ENCODE measurements at regions of chr3 and their contacts with region 1.

Region 1: DNA sequence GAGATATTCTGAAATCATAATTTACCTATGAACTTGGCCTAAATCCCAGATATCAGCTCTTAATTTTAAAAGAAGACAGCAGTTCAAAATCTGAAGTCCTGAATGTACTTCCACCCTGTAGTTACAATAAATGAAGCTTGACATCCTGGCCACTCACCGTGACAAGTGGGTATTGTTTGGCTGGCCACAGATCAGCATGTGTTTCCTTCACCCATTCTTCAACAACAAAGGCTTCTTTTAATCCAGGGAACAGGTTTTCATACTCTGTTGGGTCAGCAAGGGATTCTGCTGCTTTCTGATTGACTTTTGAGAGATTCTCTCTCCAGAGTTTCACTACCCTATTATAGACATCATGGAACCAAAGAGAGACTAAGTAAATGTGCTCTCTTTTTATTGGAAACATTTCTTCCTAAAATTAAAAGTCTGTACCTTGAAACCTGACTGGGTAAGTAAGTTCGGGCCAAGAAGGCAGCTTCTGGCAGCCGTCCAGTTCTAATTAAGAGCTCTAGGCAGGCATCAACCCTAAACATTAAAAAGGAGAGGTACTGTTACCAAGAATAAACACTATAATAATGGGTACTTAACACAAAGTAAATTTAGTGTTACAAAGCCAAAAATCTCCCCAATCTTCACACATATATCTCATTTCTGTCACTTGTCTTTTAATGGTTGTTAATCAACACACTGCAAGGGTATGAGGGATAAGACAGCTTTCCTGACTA is 15.2 kb downstream of the MRPS22 start:
- DNase-seq: no peak
- H3K4me3 Mint-ChIP-seq: no peak overlapping the region
- H3K27ac Mint-ChIP-seq: no peak overlapping the region
- H3K4me1 Mint-ChIP-seq: peaks cover 29% of the 10 kb centered on the region
- H3K27me3 Mint-ChIP-seq: no peaks in the 10 kb centered on the region

Region 2: DNA sequence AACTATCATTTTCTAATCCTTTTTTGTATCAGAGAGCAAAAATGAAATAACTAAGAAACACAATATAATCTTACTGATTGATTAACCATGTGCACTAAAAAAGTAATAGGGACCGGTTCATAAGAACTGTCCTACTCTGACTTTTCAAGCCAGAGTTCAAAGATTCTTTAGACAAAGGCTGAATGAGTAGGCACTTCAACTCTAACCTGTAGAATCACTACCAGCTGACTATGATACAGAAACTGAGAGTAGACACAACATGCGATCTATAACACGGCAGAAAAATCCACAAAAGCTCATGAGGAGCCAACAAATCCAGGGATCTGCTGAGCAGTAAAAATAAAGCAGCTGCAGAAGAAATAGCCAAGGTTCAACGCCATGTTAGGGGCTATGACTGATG is 21.6 kb after region 1 on chr3:
- CTCF ChIA-PET with region 1: interaction called, 3 read pairs
- POLR2A ChIA-PET with region 1: no interaction called
- intact Hi-C with region 1: loop called (anchors 2 kb)
- DNase-seq: no peak
- H3K4me3 Mint-ChIP-seq: no peak overlapping the region
- H3K27ac Mint-ChIP-seq: no peak overlapping the region
- H3K4me1 Mint-ChIP-seq: peaks cover 40% of the 10 kb centered on the region
- H3K27me3 Mint-ChIP-seq: no peaks in the 10 kb centered on the region

Region 3: DNA sequence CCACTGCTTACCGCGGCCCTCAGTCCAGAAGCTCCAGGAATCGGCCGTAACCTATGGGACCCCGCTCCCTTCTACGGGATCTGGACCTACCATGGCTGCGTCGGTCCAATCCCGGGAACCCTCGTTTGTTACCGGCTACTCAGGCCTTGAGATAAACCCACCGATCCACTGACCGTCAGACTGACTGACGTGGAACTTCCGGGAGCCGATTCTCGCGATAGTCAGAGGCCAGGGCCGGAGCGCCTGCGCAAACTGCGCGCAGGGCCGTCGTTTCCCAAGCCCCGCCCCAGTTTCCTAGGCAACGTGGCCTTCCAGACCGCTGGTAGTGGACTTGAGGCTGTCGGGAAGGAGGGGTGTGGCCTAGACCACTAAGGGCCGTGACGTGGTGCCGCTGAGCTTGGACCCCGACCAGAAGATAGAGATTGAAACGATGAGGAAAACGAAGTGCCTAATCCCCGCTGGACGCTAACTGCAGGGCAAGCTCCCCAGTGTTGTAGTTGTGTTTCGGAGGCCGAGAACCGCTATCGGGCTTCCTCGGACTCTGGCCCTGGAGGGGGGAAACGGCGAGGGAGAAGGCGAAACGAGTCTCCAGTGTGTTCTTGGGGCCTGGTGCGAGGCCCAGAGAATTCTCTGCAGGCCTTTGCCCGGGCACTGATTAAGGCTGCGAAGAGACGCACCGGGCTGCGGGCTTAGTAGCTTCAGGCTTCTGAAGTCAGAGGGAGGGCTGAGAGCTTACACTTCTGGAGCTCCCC is 30.6 kb after region 1 on chr3 and contains the start of gene COPB2:
- CTCF ChIA-PET with region 1: interaction called, 3 read pairs
- POLR2A ChIA-PET with region 1: no interaction called
- intact Hi-C with region 1: loop called (anchors 2 kb)
- DNase-seq: peak; percentile 98
- H3K4me3 Mint-ChIP-seq: peak within 1 kb of the TSS; percentile 92
- H3K27ac Mint-ChIP-seq: peak within 1 kb of the TSS; percentile 91
- H3K4me1 Mint-ChIP-seq: peaks cover 39% of the 10 kb centered on the region
- H3K27me3 Mint-ChIP-seq: no peaks in the 10 kb centered on the region
- total RNA-seq, gene COPB2: 104 TPM

Region 4: DNA sequence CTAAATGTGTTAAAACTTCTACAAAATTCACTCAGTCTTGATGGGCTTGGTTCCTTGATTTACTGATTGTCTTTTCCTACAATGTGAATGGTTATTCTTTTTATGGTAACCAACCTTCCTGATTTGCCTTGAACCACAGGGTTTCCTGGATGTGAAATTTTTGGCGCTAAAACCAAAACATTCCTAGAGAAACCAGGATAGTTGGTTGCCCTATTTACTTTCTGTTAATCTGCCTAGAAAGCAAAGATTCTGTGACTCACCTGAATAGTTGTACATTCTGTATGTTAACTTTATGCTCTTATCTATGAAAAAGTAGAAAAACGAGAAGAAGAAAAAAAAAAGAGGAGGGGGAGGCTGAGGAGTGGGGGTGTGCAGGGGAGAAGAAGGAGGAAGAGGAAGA is 140.5 kb after region 1 on chr3:
- CTCF ChIA-PET with region 1: no interaction called
- POLR2A ChIA-PET with region 1: no interaction called
- intact Hi-C with region 1: no loop called
- DNase-seq: no peak
- H3K4me3 Mint-ChIP-seq: no peak overlapping the region
- H3K27ac Mint-ChIP-seq: no peak overlapping the region
- H3K4me1 Mint-ChIP-seq: no peaks in the 10 kb centered on the region
- H3K27me3 Mint-ChIP-seq: no peaks in the 10 kb centered on the region